ENCODE measurements at regions of chr1 and their contacts with region 1.

Region 1: GRCh38 chr1:91511386-91511785 is 10.7 kb downstream of the CDC7 start:
- DNase-seq: peak in 2 of 9 experiments; percentile 61 to 71
- ATAC-seq: no peak
- H3K4me3 ChIP-seq: no peak overlapping the region
- H3K4me3 Mint-ChIP-seq: no peak overlapping the region
- H3K27ac ChIP-seq: no peak overlapping the region
- H3K27ac Mint-ChIP-seq: no peak overlapping the region
- H3K4me1 ChIP-seq: no peaks in the 10 kb centered on the region
- H3K4me1 Mint-ChIP-seq: no peaks in the 10 kb centered on the region
- H3K27me3 ChIP-seq: no peaks in the 10 kb centered on the region
- H3K27me3 Mint-ChIP-seq: no peaks in the 10 kb centered on the region
- CTCF ChIP-seq: peak; percentile 69

Region 2: GRCh38 chr1:91282695-91283420 is 228.5 kb before region 1 on chr1:
- CTCF ChIA-PET with region 1: interaction called, 3 read pairs
- POLR2A ChIA-PET with region 1: no interaction called
- intact Hi-C with region 1: loop called in 1 of 2 experiments (anchors 5 kb)
- DNase-seq: peak in 8 of 9 experiments; percentile 4 to 68 (median 32)
- ATAC-seq: no peak
- H3K4me3 ChIP-seq: no peak overlapping the region
- H3K4me3 Mint-ChIP-seq: no peak overlapping the region
- H3K27ac ChIP-seq: no peak overlapping the region
- H3K27ac Mint-ChIP-seq: no peak overlapping the region
- H3K4me1 ChIP-seq: no peaks in the 10 kb centered on the region
- H3K4me1 Mint-ChIP-seq: peaks cover 2% of the 10 kb centered on the region
- H3K27me3 ChIP-seq: no peaks in the 10 kb centered on the region
- H3K27me3 Mint-ChIP-seq: peaks cover 10% of the 10 kb centered on the region
- CTCF ChIP-seq: peak; percentile 73

Region 3: GRCh38 chr1:91412371-91412770 is 99.0 kb before region 1 on chr1:
- CTCF ChIA-PET with region 1: no interaction called
- POLR2A ChIA-PET with region 1: no interaction called
- intact Hi-C with region 1: no loop called
- DNase-seq: no peak
- ATAC-seq: no peak
- H3K4me3 ChIP-seq: no peak overlapping the region
- H3K4me3 Mint-ChIP-seq: no peak overlapping the region
- H3K27ac ChIP-seq: no peak overlapping the region
- H3K27ac Mint-ChIP-seq: no peak overlapping the region
- H3K4me1 ChIP-seq: no peaks in the 10 kb centered on the region
- H3K4me1 Mint-ChIP-seq: no peaks in the 10 kb centered on the region
- H3K27me3 ChIP-seq: no peaks in the 10 kb centered on the region
- H3K27me3 Mint-ChIP-seq: peaks cover 9% of the 10 kb centered on the region
- CTCF ChIP-seq: no peak

Region 4: GRCh38 chr1:91529856-91530255 is 18.5 kb after region 1 on chr1:
- CTCF ChIA-PET with region 1: interaction called, 19 read pairs
- POLR2A ChIA-PET with region 1: no interaction called
- intact Hi-C with region 1: no loop called
- DNase-seq: peak in 2 of 9 experiments; percentile 38 to 40
- ATAC-seq: no peak
- H3K4me3 ChIP-seq: no peak overlapping the region
- H3K4me3 Mint-ChIP-seq: no peak overlapping the region
- H3K27ac ChIP-seq: no peak overlapping the region
- H3K27ac Mint-ChIP-seq: no peak overlapping the region
- H3K4me1 ChIP-seq: peaks cover 10% of the 10 kb centered on the region
- H3K4me1 Mint-ChIP-seq: peaks cover 27% of the 10 kb centered on the region
- H3K27me3 ChIP-seq: no peaks in the 10 kb centered on the region
- H3K27me3 Mint-ChIP-seq: no peaks in the 10 kb centered on the region
- CTCF ChIP-seq: no peak

Region 5: DNA sequence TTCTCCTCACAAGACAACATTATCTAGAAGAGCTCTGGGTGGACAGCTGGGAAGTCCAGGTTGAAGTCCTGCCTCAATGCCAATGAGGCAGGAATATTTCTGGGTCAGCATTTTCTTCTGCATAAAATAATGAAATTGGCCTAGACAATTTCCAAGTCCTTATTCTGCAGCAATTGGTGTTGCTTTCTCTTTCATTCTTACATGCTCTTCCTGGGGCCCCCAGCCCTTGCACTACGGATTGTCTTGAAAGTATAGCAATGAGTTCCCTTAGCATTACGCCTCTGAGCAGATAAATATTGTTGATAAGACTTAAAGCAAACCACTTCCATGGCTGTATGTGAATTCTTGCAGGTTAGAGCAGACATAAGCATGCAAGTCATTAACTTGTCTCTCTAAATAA is 186.0 kb after region 1 on chr1:
- CTCF ChIA-PET with region 1: interaction called, 4 read pairs
- POLR2A ChIA-PET with region 1: no interaction called
- intact Hi-C with region 1: loop called in 1 of 2 experiments (anchors 5 kb)
- DNase-seq: peak in 8 of 9 experiments; percentile 17 to 73 (median 33)
- ATAC-seq: peak; percentile 86
- H3K4me3 ChIP-seq: no peak overlapping the region
- H3K4me3 Mint-ChIP-seq: peak overlapping the region; percentile 27
- H3K27ac ChIP-seq: peak overlapping the region in 1 of 2 experiments; percentile 65
- H3K27ac Mint-ChIP-seq: peak overlapping the region; percentile 62
- H3K4me1 ChIP-seq: peaks cover 16% of the 10 kb centered on the region
- H3K4me1 Mint-ChIP-seq: peaks cover 19% of the 10 kb centered on the region
- H3K27me3 ChIP-seq: no peaks in the 10 kb centered on the region
- H3K27me3 Mint-ChIP-seq: no peaks in the 10 kb centered on the region
- CTCF ChIP-seq: no peak

Region 6: GRCh38 chr1:91791103-91791502 is 279.7 kb after region 1 on chr1:
- CTCF ChIA-PET with region 1: interaction called, 15 read pairs
- POLR2A ChIA-PET with region 1: no interaction called
- intact Hi-C with region 1: no loop called
- DNase-seq: peak in 2 of 9 experiments; percentile 25 to 37
- ATAC-seq: peak; percentile 34
- H3K4me3 ChIP-seq: no peak overlapping the region
- H3K4me3 Mint-ChIP-seq: no peak overlapping the region
- H3K27ac ChIP-seq: peak overlapping the region in 1 of 2 experiments; percentile 58
- H3K27ac Mint-ChIP-seq: peak overlapping the region; percentile 12
- H3K4me1 ChIP-seq: peaks cover 27% of the 10 kb centered on the region
- H3K4me1 Mint-ChIP-seq: peaks cover 37% of the 10 kb centered on the region
- H3K27me3 ChIP-seq: no peaks in the 10 kb centered on the region
- H3K27me3 Mint-ChIP-seq: no peaks in the 10 kb centered on the region
- CTCF ChIP-seq: no peak

Region 7: GRCh38 chr1:91885716-91886506 is 374.5 kb after region 1 on chr1 and contains the start of gene TGFBR3:
- CTCF ChIA-PET with region 1: interaction called, 21 read pairs
- POLR2A ChIA-PET with region 1: interaction called, 14 read pairs
- intact Hi-C with region 1: loop called (anchors 2 kb)
- DNase-seq: peak; percentile 56 to 89 (median 83)
- ATAC-seq: peak; percentile 77
- H3K4me3 ChIP-seq: peak within 1 kb of the TSS; percentile 61 to 71
- H3K4me3 Mint-ChIP-seq: peak within 1 kb of the TSS; percentile 94
- H3K27ac ChIP-seq: peak within 1 kb of the TSS; percentile 40 to 63
- H3K27ac Mint-ChIP-seq: peak within 1 kb of the TSS; percentile 91
- H3K4me1 ChIP-seq: peaks cover 12% of the 10 kb centered on the region
- H3K4me1 Mint-ChIP-seq: peaks cover 31% of the 10 kb centered on the region
- H3K27me3 ChIP-seq: no peaks in the 10 kb centered on the region
- H3K27me3 Mint-ChIP-seq: no peaks in the 10 kb centered on the region
- CTCF ChIP-seq: no peak
- total RNA-seq, gene TGFBR3: 36.7 to 37.9 TPM

Region 8: GRCh38 chr1:92030656-92031107 is 519.3 kb after region 1 on chr1:
- CTCF ChIA-PET with region 1: no interaction called
- POLR2A ChIA-PET with region 1: no interaction called
- intact Hi-C with region 1: no loop called
- DNase-seq: peak in 2 of 9 experiments; percentile 7 to 32
- ATAC-seq: no peak
- H3K4me3 ChIP-seq: peak overlapping the region in 1 of 2 experiments; percentile 52
- H3K4me3 Mint-ChIP-seq: peak overlapping the region; percentile 66
- H3K27ac ChIP-seq: no peak overlapping the region
- H3K27ac Mint-ChIP-seq: no peak overlapping the region
- H3K4me1 ChIP-seq: peaks cover 10% of the 10 kb centered on the region
- H3K4me1 Mint-ChIP-seq: peaks cover 17% of the 10 kb centered on the region
- H3K27me3 ChIP-seq: peaks cover 0 to 2% of the 10 kb centered on the region in 2 experiments
- H3K27me3 Mint-ChIP-seq: peaks cover 18% of the 10 kb centered on the region
- CTCF ChIP-seq: no peak

Region 9: DNA sequence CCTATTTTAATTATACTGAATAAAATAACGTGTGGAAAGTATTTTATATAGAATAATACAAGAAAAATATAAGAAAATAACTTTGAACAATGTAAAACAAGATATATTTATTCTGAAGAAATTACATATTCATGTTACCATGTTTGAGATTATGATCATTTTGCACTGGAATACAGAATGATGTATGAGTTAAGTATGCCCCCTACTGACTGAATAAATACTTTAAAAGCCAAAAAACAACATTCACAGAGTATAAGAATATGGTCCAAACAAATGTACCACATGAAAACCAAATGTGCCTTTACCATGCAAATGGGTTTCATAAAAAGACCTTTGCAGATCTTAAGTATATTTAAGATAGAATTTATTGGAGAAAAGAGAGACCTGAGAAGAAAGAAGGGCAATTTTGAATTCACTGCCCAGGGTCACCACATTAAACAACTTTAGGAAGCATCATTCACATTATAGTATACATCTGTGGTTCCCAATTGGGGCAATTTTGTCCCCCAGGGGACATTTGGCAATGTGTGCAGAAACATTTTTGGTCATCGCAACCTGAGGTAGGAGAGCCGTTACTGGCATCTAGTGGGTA is 1111.9 kb after region 1 on chr1:
- CTCF ChIA-PET with region 1: no interaction called
- POLR2A ChIA-PET with region 1: no interaction called
- intact Hi-C with region 1: loop called (anchors 5 to 10 kb)
- DNase-seq: peak in 2 of 9 experiments; percentile 39 to 57
- ATAC-seq: no peak
- H3K4me3 ChIP-seq: no peak overlapping the region
- H3K4me3 Mint-ChIP-seq: no peak overlapping the region
- H3K27ac ChIP-seq: no peak overlapping the region
- H3K27ac Mint-ChIP-seq: no peak overlapping the region
- H3K4me1 ChIP-seq: no peaks in the 10 kb centered on the region
- H3K4me1 Mint-ChIP-seq: no peaks in the 10 kb centered on the region
- H3K27me3 ChIP-seq: no peaks in the 10 kb centered on the region
- H3K27me3 Mint-ChIP-seq: no peaks in the 10 kb centered on the region
- CTCF ChIP-seq: peak; percentile 81